ENCODE measurements at regions of chr17 and their contacts with region 1.

Region 1: DNA sequence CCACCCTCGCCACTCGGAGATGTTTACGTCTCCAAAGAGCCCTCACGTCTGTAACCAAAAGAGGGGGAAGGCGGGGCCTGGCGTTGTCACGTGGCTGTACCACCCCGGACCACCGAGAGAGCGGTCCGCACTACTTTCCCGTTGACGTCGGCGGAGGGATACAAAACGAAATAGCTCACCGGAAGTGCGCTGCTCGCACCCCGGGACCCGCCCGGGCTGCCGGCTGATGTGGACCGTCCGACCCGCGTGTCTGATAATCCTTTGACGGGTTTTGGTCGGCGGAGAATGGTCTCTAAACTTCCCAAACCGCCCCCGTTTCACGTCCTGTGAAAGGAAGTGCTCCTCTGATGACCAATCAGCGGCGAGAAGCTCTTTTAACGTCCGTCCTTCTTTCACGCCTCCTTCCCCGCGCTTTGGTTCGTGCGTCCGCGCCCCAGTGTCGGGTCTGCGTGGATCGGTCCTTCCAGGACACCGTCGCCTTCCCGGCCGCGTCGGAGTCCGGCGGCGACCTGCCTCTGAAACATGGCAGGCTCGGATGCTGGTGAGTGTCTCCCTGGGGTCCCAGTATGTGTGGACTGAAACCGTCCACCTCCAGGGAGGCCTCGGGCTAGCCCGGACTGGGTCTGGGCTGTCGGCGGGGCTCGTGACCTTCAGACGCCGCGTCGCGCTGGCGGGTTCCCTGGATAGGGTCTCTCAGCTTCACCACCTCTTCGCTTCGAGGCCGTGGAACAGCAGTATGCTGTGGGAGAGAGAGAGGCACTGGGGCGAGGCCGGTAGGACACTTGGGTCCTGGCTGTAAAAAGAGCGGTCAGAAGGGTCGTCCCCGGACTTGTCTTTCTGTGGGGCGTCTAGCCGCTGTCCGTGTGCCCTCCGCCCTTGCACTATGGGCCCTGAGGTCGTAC is at the start of gene CEP95:
- DNase-seq: peak in 3 of 4 experiments; percentile 80 to 95 (median 88)
- ATAC-seq: peak; percentile 76
- H3K4me3 ChIP-seq: peak within 1 kb of the TSS; percentile 77
- H3K27ac ChIP-seq: peak within 1 kb of the TSS; percentile 97
- H3K4me1 ChIP-seq: peaks cover 6 to 13% of the 10 kb centered on the region in 2 experiments; a peak in 3 of 5 replicates
- H3K27me3 ChIP-seq: no peaks in the 10 kb centered on the region
- CTCF ChIP-seq: no peak
- EP300 ChIP-seq: peak; percentile 15; the same call in 1 of the 2 replicates
- POLR2A ChIP-seq: peak; percentile 72
- RAD21 ChIP-seq: no peak
- polyA plus RNA-seq, gene CEP95: 26.7 to 40.0 TPM

Region 2: GRCh38 chr17:64320613-64321553 is 185.9 kb before region 1 on chr17:
- CTCF ChIA-PET with region 1: no interaction called
- POLR2A ChIA-PET with region 1: no interaction called
- in situ Hi-C with region 1: no loop called
- intact Hi-C with region 1: no loop called
- DNase-seq: peak; percentile 80 to 84 (median 84)
- ATAC-seq: peak; percentile 88
- H3K4me3 ChIP-seq: no peak overlapping the region
- H3K27ac ChIP-seq: no peak overlapping the region
- H3K4me1 ChIP-seq: peaks cover 0 to 7% of the 10 kb centered on the region in 2 experiments; a peak in 1 of 5 replicates
- H3K27me3 ChIP-seq: no peaks in the 10 kb centered on the region; a peak in 1 of 5 replicates
- CTCF ChIP-seq: peak; percentile 78 to 94 (median 83)
- EP300 ChIP-seq: peak; percentile 26; the same call in 1 of the 2 replicates
- POLR2A ChIP-seq: no peak
- RAD21 ChIP-seq: peak; percentile 91 to 96

Region 3: DNA sequence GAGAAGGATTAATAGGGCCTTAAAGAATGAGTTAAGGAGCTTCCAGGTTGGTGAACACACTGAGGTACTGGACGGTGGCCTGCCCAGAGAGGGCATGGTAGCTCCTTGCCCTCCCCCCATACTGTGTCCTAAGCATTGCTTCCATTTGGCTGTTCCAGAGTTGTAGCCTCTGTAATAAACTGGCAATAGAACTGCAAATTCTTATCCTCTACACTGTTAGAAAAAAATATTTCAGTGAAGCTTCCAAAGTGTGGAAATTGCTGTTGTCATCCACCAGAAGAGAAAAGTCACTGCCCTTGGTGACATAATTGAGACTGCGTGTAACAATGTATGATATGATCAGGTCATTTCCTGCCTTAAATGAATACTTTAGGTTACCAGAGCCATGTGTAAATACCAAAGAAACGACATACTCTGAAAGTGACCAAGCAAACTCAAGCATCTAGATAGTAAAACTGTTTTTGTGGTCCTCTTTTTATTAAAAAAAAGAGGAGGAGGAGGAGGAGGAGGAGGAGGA is 65.9 kb after region 1 on chr17:
- CTCF ChIA-PET with region 1: no interaction called
- POLR2A ChIA-PET with region 1: interaction called, 18 read pairs
- in situ Hi-C with region 1: no loop called
- intact Hi-C with region 1: no loop called
- DNase-seq: peak in 3 of 4 experiments; percentile 12 to 76 (median 53)
- ATAC-seq: peak; percentile 93
- H3K4me3 ChIP-seq: no peak overlapping the region
- H3K27ac ChIP-seq: peak overlapping the region; percentile 98
- H3K4me1 ChIP-seq: peaks cover 7 to 20% of the 10 kb centered on the region in 2 experiments; a peak in 4 of 5 replicates
- H3K27me3 ChIP-seq: no peaks in the 10 kb centered on the region
- CTCF ChIP-seq: no peak
- EP300 ChIP-seq: peak; percentile 48
- POLR2A ChIP-seq: peak; percentile 28; the same call in 1 of the 2 replicates
- RAD21 ChIP-seq: no peak

Region 4: DNA sequence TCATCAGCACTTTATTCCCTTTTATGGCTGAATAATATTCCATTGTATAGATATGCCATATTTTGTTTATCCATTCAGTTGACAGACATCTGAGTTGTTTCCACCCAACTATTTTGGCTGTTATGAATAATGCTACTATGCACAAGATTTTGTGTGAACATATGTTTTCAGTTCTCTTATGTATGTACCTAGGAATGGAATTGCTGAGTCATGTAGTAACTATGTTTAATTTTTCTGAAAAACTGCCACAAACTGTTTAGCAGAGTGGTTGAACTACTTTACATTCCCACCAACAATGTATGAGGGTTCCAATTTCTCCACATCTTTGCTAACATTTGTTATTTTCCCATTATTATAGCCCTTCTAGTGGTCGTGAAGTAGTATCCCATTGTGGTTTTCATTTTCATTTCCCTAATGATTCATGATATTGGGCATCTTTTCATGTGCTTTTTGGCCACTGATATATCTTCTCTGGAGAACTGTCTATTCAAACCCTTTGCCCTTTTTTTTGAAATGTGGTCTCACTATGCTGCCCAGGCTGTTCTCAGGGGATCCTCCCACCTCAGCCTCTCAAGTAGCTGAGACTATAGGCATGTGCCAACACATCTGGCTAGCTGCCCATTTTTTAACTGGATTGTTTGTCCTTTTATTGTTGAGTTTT is 128.9 kb after region 1 on chr17:
- CTCF ChIA-PET with region 1: no interaction called
- POLR2A ChIA-PET with region 1: interaction called, 10 read pairs
- in situ Hi-C with region 1: no loop called
- intact Hi-C with region 1: no loop called
- DNase-seq: no peak
- ATAC-seq: no peak
- H3K4me3 ChIP-seq: no peak overlapping the region
- H3K27ac ChIP-seq: peak overlapping the region; percentile 56
- H3K4me1 ChIP-seq: peaks cover 0 to 7% of the 10 kb centered on the region in 2 experiments; a peak in 3 of 5 replicates
- H3K27me3 ChIP-seq: no peaks in the 10 kb centered on the region
- CTCF ChIP-seq: no peak
- EP300 ChIP-seq: no peak
- POLR2A ChIP-seq: no peak
- RAD21 ChIP-seq: no peak

Region 5: DNA sequence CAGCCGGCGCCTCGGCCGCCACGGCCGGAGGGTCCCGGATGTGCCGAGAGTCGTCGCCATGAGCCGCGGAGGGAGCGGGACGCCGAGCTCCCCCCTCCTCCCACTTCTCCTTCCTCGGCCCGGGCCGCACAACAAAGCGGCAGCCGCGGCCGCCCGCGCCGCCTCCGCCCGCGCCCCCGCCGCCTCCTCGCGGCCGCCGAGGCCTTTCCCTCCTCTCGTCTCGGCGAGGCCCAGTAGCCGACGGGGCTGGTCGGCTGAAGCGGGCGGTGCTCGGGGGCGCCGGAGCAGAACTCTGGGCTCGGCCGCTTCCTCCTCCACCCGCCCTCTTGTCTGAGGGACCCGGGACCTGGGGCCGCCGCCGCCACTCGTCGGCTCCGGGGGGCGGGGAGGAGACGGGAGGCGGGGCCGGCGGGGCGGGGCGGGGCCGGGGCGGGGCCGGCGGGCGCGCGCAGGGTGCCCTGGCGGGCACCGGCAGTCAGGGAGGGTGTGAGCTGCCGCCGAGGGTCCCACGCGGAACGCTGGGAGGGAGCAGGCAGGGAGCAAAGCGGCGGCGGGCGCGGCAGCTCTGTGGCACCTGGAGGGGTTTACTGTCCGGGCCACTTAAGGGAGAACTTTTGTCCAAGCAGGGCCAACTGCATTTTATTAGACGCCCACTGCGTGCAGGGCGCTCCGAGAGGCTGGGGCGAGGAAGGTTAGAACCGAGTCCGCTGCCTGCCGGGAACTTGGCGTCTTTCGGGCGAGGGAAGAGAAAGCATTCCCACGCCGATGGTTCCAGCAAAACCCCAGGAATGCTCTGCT is 155.3 kb after region 1 on chr17 and contains the start of gene SMURF2:
- CTCF ChIA-PET with region 1: no interaction called
- POLR2A ChIA-PET with region 1: interaction called, 10 read pairs
- in situ Hi-C with region 1: no loop called
- intact Hi-C with region 1: no loop called
- DNase-seq: peak; percentile 74 to 94 (median 92)
- ATAC-seq: peak; percentile 88
- H3K4me3 ChIP-seq: peak within 1 kb of the TSS; percentile 85
- H3K27ac ChIP-seq: peak within 1 kb of the TSS; percentile 88
- H3K4me1 ChIP-seq: peaks cover 7 to 11% of the 10 kb centered on the region in 2 experiments; a peak in 4 of 5 replicates
- H3K27me3 ChIP-seq: no peaks in the 10 kb centered on the region
- CTCF ChIP-seq: no peak
- EP300 ChIP-seq: no peak
- POLR2A ChIP-seq: peak; percentile 55; the same call in 1 of the 2 replicates
- RAD21 ChIP-seq: no peak
- polyA plus RNA-seq, gene SMURF2: 3.8 to 5.0 TPM

Measured in K562 (cell line).